ENCODE measurements at regions of chr3 and their contacts with region 1.

Region 1: DNA sequence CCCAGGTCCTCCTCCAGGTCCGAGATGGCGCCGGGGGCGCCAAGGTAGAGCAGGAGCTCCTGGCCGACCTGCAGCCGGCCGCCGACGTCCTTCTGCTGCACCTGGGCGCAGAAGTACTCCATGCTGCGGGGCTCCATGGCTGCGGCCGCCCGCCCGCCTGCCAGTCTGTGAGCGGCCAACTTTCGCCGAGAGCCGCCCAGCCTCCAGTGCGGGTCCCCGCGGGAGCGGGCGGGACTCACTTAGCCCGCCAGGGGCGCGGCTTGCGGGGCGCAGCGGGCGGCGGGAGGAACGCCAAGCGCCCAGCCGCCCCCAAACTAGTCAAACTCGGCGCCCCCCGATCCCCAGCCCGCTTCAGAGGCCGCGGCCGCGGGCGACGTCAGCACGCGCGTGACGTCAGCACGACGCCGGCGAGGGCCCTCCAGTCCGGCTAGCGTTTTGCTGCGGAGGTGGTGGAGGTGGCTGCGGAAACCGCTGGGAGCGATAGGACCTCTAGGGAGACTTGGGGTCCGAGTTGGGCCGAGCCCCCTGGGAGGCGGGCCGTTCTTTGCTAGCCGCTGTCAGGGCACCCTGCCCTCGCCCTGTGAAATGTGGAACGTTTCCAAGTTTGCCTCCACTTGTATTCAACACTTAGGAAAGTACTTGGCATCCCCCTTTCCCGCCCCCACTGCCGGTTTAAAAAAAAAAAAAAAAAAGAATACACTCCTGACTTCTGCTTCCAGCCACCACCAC is at the start of gene CLASP2:
- DNase-seq: peak; percentile 81
- H3K4me3 ChIP-seq: peak within 1 kb of the TSS; percentile 86 to 97 (median 91)
- H3K27ac ChIP-seq: peak within 1 kb of the TSS; percentile 85
- H3K4me1 ChIP-seq: peaks cover 13% of the 10 kb centered on the region
- H3K27me3 ChIP-seq: no peaks in the 10 kb centered on the region
- CTCF ChIP-seq: no peak
- total RNA-seq, gene CLASP2: 50.7 to 54.8 TPM

Region 2: GRCh38 chr3:33392703-33393125 is 325.3 kb before region 1 on chr3:
- CTCF ChIA-PET with region 1: no interaction called
- dilution Hi-C with region 1: no loop called
- in situ Hi-C with region 1: no loop called
- intact Hi-C with region 1: loop called (anchors 5 kb)
- DNase-seq: peak; percentile 87
- H3K4me3 ChIP-seq: no peak overlapping the region
- H3K27ac ChIP-seq: peak overlapping the region; percentile 43
- H3K4me1 ChIP-seq: peaks cover 16% of the 10 kb centered on the region
- H3K27me3 ChIP-seq: no peaks in the 10 kb centered on the region
- CTCF ChIP-seq: no peak

Region 3: DNA sequence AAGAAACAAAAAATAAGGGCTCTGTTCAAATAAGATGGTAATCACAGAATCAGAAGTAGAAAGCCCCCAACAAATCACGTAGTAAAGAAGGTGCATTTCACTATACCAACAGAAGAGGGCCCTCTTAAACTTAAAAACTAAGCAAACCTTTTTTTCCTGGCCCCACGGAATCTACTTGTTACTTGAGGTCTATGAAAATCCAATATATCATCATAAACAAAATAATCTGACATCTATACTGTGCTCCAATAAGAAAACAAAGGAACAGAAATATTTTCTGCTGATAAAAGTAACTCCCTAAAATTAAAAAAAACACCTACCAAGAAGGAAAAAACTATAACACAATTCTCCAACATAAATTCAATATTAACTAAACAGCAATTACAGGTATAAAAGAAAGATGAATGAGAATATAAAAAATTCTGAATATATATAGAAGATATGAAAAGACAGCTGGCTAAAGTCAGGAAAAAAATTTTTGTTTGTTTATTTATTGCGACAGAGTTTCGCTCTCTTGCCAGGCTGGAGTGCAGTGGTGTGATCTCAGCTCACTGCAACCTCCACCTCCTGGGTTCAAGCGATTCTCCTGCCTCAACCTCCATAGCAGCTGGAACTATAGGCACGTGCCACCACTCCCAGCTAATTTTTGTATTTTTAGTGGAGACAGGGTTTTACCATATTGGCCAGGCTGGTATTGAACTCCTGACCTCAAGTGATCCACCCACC is 81.7 kb before region 1 on chr3:
- CTCF ChIA-PET with region 1: no interaction called
- dilution Hi-C with region 1: no loop called
- in situ Hi-C with region 1: loop called in 1 of 2 experiments (anchors 10 kb)
- intact Hi-C with region 1: loop called (anchors 1 kb)
- DNase-seq: peak; percentile 37
- H3K4me3 ChIP-seq: no peak overlapping the region
- H3K27ac ChIP-seq: no peak overlapping the region
- H3K4me1 ChIP-seq: no peaks in the 10 kb centered on the region
- H3K27me3 ChIP-seq: no peaks in the 10 kb centered on the region
- CTCF ChIP-seq: peak; percentile 45 to 61

Region 4: GRCh38 chr3:33749546-33750210 is 31.6 kb after region 1 on chr3:
- CTCF ChIA-PET with region 1: no interaction called
- dilution Hi-C with region 1: no loop called
- in situ Hi-C with region 1: no loop called
- intact Hi-C with region 1: loop called (anchors 2 kb)
- DNase-seq: peak; percentile 90
- H3K4me3 ChIP-seq: no peak overlapping the region
- H3K27ac ChIP-seq: peak overlapping the region; percentile 67
- H3K4me1 ChIP-seq: peaks cover 6% of the 10 kb centered on the region
- H3K27me3 ChIP-seq: no peaks in the 10 kb centered on the region
- CTCF ChIP-seq: no peak

Region 5: GRCh38 chr3:33787328-33788009 is 69.4 kb after region 1 on chr3:
- CTCF ChIA-PET with region 1: interaction called, 4 read pairs
- dilution Hi-C with region 1: loop called (anchors 5 kb)
- in situ Hi-C with region 1: no loop called
- intact Hi-C with region 1: loop called (anchors 1 kb)
- DNase-seq: peak; percentile 58
- H3K4me3 ChIP-seq: no peak overlapping the region
- H3K27ac ChIP-seq: no peak overlapping the region
- H3K4me1 ChIP-seq: peaks cover 31% of the 10 kb centered on the region
- H3K27me3 ChIP-seq: no peaks in the 10 kb centered on the region
- CTCF ChIP-seq: peak; percentile 83 to 94

Region 6: GRCh38 chr3:33947272-33948195 is 229.5 kb after region 1 on chr3:
- CTCF ChIA-PET with region 1: no interaction called
- dilution Hi-C with region 1: no loop called
- in situ Hi-C with region 1: no loop called
- intact Hi-C with region 1: no loop called
- DNase-seq: no peak
- H3K4me3 ChIP-seq: no peak overlapping the region
- H3K27ac ChIP-seq: no peak overlapping the region
- H3K4me1 ChIP-seq: peaks cover 7% of the 10 kb centered on the region
- H3K27me3 ChIP-seq: no peaks in the 10 kb centered on the region
- CTCF ChIP-seq: no peak

Measured in mammary epithelial cell (primary cell).